ENCODE measurements at regions of chr14 and their contacts with region 1.

Region 1: GRCh38 chr14:24146978-24147760 is at the start of gene RNF31:
- DNase-seq: peak; percentile 91
- ATAC-seq: peak; percentile 85
- H3K4me3 Mint-ChIP-seq: peak within 1 kb of the TSS; percentile 97
- H3K27ac Mint-ChIP-seq: peak within 1 kb of the TSS; percentile 94
- H3K4me1 Mint-ChIP-seq: peaks cover 51% of the 10 kb centered on the region
- H3K27me3 Mint-ChIP-seq: no peaks in the 10 kb centered on the region
- CTCF ChIP-seq: no peak
- total RNA-seq, gene RNF31: 87.4 and 99.8 TPM in 2 replicates

Region 2: GRCh38 chr14:23320774-23321571 is 826.2 kb before region 1 on chr14 and contains the start of gene PABPN1:
- CTCF ChIA-PET with region 1: no interaction called
- POLR2A ChIA-PET with region 1: no interaction called
- intact Hi-C with region 1: loop called (anchors 2 kb)
- DNase-seq: peak; percentile 89
- ATAC-seq: peak; percentile 87
- H3K4me3 Mint-ChIP-seq: peak within 1 kb of the TSS; percentile 90
- H3K27ac Mint-ChIP-seq: peak within 1 kb of the TSS; percentile 98
- H3K4me1 Mint-ChIP-seq: peaks cover 26% of the 10 kb centered on the region
- H3K27me3 Mint-ChIP-seq: no peaks in the 10 kb centered on the region
- CTCF ChIP-seq: no peak
- total RNA-seq, gene PABPN1: 259 and 264 TPM in 2 replicates

Region 3: DNA sequence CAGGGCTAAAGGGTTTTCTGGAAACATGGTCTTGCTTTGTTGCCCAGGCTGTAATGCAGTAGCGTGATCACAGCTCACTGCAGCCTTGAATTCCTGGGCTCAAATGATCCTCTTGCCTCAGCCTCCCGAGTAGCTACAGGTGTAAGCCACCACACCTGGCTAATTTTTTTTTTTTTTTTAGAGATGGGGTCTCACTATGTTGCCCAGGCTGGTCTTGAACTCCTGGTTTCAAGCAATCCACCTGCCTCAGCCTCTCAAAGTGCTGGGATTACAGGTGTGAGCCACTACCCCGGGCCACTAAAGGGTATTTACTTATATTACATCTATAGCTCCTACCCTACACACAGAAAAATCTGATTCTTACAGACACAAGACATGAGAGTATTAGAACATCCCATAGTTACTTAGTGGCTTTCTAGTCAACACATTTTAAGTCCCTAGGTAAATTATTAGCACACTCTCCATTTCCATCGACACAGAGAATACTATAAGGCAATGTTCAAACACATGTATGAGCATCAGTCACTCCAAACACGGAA is 38.8 kb before region 1 on chr14:
- CTCF ChIA-PET with region 1: interaction called, 28 read pairs
- POLR2A ChIA-PET with region 1: interaction called, 83 read pairs
- intact Hi-C with region 1: no loop called
- DNase-seq: no peak
- ATAC-seq: no peak
- H3K4me3 Mint-ChIP-seq: no peak overlapping the region
- H3K27ac Mint-ChIP-seq: peak overlapping the region; percentile 90
- H3K4me1 Mint-ChIP-seq: peaks cover 12% of the 10 kb centered on the region
- H3K27me3 Mint-ChIP-seq: no peaks in the 10 kb centered on the region
- CTCF ChIP-seq: no peak

Region 4: DNA sequence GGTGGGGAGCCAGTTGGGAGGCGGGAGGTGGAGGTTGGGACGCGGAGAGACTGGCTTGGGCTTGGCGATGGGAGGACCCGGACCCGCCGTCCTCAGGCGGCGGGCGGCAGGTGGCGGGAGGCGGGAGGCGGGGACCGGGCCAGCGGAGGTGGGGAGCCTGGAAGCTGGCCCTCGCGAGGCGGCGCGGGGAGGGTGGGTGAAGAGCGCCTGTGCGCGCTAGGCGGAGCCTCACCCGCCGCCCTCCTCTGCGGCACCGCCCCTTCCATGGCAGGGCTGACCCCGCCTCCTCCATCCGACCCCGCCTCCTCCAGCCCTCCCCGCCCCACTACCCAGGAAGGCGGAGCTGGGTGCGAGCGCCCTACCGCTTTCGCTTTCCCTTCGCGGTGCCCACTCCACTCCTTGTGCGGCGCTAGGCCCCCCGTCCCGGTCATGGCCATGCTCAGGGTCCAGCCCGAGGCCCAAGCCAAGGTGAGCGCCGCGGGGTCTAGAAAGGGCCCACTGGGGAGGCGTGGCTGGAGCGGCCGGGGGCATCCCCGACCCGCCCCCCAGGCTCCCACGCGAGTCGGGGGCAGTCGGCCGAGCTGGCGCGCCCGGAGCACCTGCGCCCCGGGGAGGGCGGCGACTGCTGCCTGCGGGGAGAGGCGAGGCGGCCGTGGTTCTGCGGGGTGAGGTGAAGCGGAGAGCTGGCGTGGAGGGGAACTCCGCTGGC is 11.2 kb before region 1 on chr14 and contains the start of gene PSME1:
- CTCF ChIA-PET with region 1: interaction called, 13 read pairs
- POLR2A ChIA-PET with region 1: interaction called, 94 read pairs
- intact Hi-C with region 1: loop called (anchors 1 kb)
- DNase-seq: peak; percentile 94
- ATAC-seq: peak; percentile 97
- H3K4me3 Mint-ChIP-seq: peak within 1 kb of the TSS; percentile 91
- H3K27ac Mint-ChIP-seq: peak within 1 kb of the TSS; percentile 90
- H3K4me1 Mint-ChIP-seq: peaks cover 57% of the 10 kb centered on the region
- H3K27me3 Mint-ChIP-seq: no peaks in the 10 kb centered on the region
- CTCF ChIP-seq: no peak
- total RNA-seq, gene PSME1: 406 and 449 TPM in 2 replicates

Region 5: GRCh38 chr14:24188251-24189058 is 41.3 kb after region 1 on chr14 and contains the start of gene IPO4:
- CTCF ChIA-PET with region 1: no interaction called
- POLR2A ChIA-PET with region 1: interaction called, 27 read pairs
- intact Hi-C with region 1: loop called (anchors 2 kb)
- DNase-seq: peak; percentile 81
- ATAC-seq: peak; percentile 92
- H3K4me3 Mint-ChIP-seq: peak within 1 kb of the TSS; percentile 91
- H3K27ac Mint-ChIP-seq: peak within 1 kb of the TSS; percentile 87
- H3K4me1 Mint-ChIP-seq: peaks cover 32% of the 10 kb centered on the region
- H3K27me3 Mint-ChIP-seq: no peaks in the 10 kb centered on the region
- CTCF ChIP-seq: no peak
- total RNA-seq, gene IPO4: 76.4 and 80.3 TPM in 2 replicates

Region 6: GRCh38 chr14:24215495-24216344 is 68.6 kb after region 1 on chr14 and contains the start of gene MDP1:
- CTCF ChIA-PET with region 1: interaction called, 3 read pairs
- POLR2A ChIA-PET with region 1: interaction called, 25 read pairs
- intact Hi-C with region 1: loop called (anchors 1 kb)
- DNase-seq: peak; percentile 71
- ATAC-seq: peak; percentile 75
- H3K4me3 Mint-ChIP-seq: peak within 1 kb of the TSS; percentile 93
- H3K27ac Mint-ChIP-seq: peak within 1 kb of the TSS; percentile 95
- H3K4me1 Mint-ChIP-seq: peaks cover 50% of the 10 kb centered on the region
- H3K27me3 Mint-ChIP-seq: no peaks in the 10 kb centered on the region
- CTCF ChIP-seq: no peak
- total RNA-seq, gene MDP1: 12.7 and 16.3 TPM in 2 replicates

Region 7: GRCh38 chr14:24271134-24271833 is 124.1 kb after region 1 on chr14 and contains the start of gene RABGGTA:
- CTCF ChIA-PET with region 1: no interaction called
- POLR2A ChIA-PET with region 1: interaction called, 5 read pairs
- intact Hi-C with region 1: loop called (anchors 1 kb)
- DNase-seq: peak; percentile 88
- ATAC-seq: peak; percentile 83
- H3K4me3 Mint-ChIP-seq: peak within 1 kb of the TSS; percentile 90
- H3K27ac Mint-ChIP-seq: peak within 1 kb of the TSS; percentile 96
- H3K4me1 Mint-ChIP-seq: peaks cover 57% of the 10 kb centered on the region
- H3K27me3 Mint-ChIP-seq: no peaks in the 10 kb centered on the region
- CTCF ChIP-seq: no peak
- total RNA-seq, gene RABGGTA: 53.6 and 70.5 TPM in 2 replicates